Activated naive CD4-positive, alpha-beta T cell treated with anti-CD3 and anti-CD28 coated beads for 36 hours (primary cell): ENCODE measurements at regions of chr9 and their contacts with region 1.

Region 1: GRCh38 chr9:95726756-95727155 is 148.7 kb upstream of the ERCC6L2 start:
- DNase-seq: no peak
- H3K4me3 Mint-ChIP-seq: no peak overlapping the region
- H3K27ac Mint-ChIP-seq: no peak overlapping the region
- H3K4me1 Mint-ChIP-seq: peaks cover 34% of the 10 kb centered on the region
- H3K27me3 Mint-ChIP-seq: peaks cover 3% of the 10 kb centered on the region

Region 2: GRCh38 chr9:95494416-95495371 is 232.1 kb before region 1 on chr9:
- CTCF ChIA-PET with region 1: no interaction called
- intact Hi-C with region 1: loop called (anchors 5 kb)
- DNase-seq: peak; percentile 92
- H3K4me3 Mint-ChIP-seq: peak overlapping the region; percentile 75
- H3K27ac Mint-ChIP-seq: peak overlapping the region; percentile 90
- H3K4me1 Mint-ChIP-seq: peaks cover 49% of the 10 kb centered on the region
- H3K27me3 Mint-ChIP-seq: no peaks in the 10 kb centered on the region

Region 3: DNA sequence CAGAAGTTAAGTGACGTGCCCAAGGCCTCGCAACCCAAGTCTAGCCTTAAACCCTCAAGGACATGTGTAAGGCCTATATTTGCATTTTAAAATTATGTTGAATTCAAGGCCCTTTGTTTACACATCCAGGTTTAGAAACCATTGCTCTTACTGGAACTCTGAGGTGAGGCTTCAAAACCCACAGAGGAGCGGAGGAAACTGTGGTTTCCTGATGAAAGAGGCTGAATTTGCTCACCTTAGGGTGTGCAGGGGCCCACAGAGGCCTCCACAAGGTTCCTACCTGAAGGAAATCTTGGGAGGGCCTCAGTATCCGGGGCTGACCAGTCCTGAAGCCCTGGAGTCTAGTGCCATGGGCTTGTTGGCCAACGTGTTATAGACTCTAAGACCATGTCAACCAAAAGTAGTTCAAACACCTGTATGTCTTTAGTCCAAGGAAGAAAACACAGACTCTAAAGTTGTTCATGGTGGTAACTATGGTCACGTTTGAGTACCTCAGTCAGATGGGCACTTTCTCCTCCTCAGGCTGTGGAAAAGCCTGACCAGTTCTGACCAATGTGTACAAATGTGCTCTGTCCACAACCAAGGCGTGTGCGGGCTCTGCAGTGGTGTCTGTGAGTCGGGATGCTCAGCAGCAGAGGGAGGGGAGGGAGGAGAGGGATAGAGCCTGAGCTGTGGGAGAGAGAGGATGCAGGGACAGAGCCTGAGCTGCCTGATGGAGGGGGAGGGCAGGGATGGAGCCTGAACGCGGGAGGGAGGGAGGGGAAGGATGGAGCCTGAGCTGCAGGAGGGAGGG is 24.2 kb after region 1 on chr9:
- CTCF ChIA-PET with region 1: no interaction called
- intact Hi-C with region 1: loop called (anchors 1 kb)
- DNase-seq: peak; percentile 64
- H3K4me3 Mint-ChIP-seq: no peak overlapping the region
- H3K27ac Mint-ChIP-seq: no peak overlapping the region
- H3K4me1 Mint-ChIP-seq: peaks cover 7% of the 10 kb centered on the region
- H3K27me3 Mint-ChIP-seq: peaks cover 10% of the 10 kb centered on the region

Region 4: DNA sequence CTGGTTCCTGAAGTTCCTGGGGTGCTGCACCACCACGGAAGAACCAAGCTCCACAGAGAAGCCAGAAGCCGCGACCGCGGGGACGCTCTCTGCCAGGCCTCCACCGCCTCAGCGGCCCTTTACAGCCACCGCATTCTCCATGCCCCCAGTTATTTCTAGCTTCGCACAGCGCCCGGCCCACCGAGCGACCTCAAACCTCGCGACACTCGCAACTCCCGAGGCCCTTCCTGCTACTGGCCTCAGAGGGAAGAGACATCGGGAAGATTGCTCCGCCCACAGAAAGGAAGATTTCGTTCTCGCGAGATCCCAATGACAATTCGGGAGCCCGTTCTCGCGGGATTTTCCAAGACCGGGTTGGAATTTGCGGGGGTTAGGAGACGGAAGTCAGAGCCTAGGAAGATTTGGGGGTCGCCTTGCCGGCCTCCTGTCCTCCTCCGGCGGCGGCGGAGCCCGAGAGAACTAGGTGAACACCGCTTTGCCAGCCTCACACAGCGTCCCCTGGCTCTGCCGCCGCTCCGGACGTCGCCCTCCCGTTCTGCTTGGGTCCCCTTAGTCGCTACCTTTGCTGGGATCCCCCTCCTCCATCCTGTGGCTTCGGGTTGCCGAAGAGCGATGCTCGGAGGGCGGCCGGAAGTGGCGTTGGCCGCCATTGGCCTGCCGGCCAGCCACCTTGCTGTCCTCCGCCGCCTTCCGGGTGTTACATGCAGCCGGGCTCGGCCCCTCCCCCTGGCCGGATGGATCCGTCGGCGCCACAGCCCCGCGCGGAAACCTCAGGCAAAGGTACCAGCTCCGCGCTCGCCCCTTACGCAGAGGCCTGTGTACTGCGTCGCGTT is 148.8 kb after region 1 on chr9 and contains the start of gene ERCC6L2:
- CTCF ChIA-PET with region 1: interaction called, 3 read pairs
- intact Hi-C with region 1: loop called (anchors 1 kb)
- DNase-seq: peak; percentile 96
- H3K4me3 Mint-ChIP-seq: no peak within 1 kb of the TSS
- H3K27ac Mint-ChIP-seq: no peak within 1 kb of the TSS
- H3K4me1 Mint-ChIP-seq: peaks cover 24% of the 10 kb centered on the region
- H3K27me3 Mint-ChIP-seq: no peaks in the 10 kb centered on the region
- total RNA-seq, gene ERCC6L2: 20.3 to 20.6 TPM

Region 5: DNA sequence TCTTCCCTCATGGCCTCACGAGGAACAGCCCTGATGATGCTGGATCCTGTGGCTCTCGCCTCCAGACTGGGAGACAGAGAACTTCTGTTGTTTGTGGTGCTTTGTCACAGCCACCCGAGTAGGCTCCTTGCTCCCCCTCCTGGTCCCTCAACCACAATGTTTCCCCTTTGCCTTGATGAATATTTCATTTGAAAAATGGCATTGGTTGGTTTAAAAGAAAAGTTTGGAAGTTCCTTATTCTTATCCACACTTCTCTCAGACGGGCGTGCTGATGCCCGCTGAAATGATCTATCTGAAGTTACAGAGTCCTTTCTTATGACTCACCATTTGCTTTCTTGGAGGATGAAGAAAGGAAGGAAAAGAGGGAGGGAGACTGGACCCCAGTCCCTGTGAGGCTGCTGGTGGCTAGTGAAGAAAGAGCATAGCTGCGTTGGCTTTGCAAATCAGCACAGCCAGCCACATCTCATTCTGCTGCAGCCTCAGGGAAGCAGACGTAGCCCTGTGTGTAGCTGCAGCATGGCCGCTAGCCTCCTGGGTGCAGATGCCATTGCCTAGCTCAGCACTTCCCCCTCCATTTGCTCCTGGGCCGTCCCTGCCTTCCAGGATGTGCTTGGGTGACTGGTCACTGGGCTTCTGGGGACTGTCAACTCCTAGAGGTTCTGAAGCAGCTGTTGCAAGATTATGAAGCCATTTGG is 334.7 kb after region 1 on chr9:
- CTCF ChIA-PET with region 1: no interaction called
- intact Hi-C with region 1: loop called (anchors 1 kb)
- DNase-seq: peak; percentile 72
- H3K4me3 Mint-ChIP-seq: no peak overlapping the region
- H3K27ac Mint-ChIP-seq: no peak overlapping the region
- H3K4me1 Mint-ChIP-seq: peaks cover 8% of the 10 kb centered on the region
- H3K27me3 Mint-ChIP-seq: no peaks in the 10 kb centered on the region

Region 6: GRCh38 chr9:96241391-96241809 is 514.6 kb after region 1 on chr9:
- CTCF ChIA-PET with region 1: no interaction called
- intact Hi-C with region 1: loop called (anchors 1 kb)
- DNase-seq: peak; percentile 83
- H3K4me3 Mint-ChIP-seq: no peak overlapping the region
- H3K27ac Mint-ChIP-seq: no peak overlapping the region
- H3K4me1 Mint-ChIP-seq: peaks cover 13% of the 10 kb centered on the region
- H3K27me3 Mint-ChIP-seq: peaks cover 23% of the 10 kb centered on the region

Region 7: GRCh38 chr9:96654443-96655197 is 927.9 kb after region 1 on chr9:
- CTCF ChIA-PET with region 1: no interaction called
- intact Hi-C with region 1: no loop called
- DNase-seq: peak; percentile 65
- H3K4me3 Mint-ChIP-seq: peak overlapping the region; percentile 73
- H3K27ac Mint-ChIP-seq: peak overlapping the region; percentile 15
- H3K4me1 Mint-ChIP-seq: peaks cover 9% of the 10 kb centered on the region
- H3K27me3 Mint-ChIP-seq: no peaks in the 10 kb centered on the region

Region 8: GRCh38 chr9:96777426-96777864 is 1050.7 kb after region 1 on chr9:
- CTCF ChIA-PET with region 1: no interaction called
- intact Hi-C with region 1: loop called (anchors 10 kb)
- DNase-seq: no peak
- H3K4me3 Mint-ChIP-seq: peak overlapping the region; percentile 100
- H3K27ac Mint-ChIP-seq: peak overlapping the region; percentile 96
- H3K4me1 Mint-ChIP-seq: peaks cover 32% of the 10 kb centered on the region
- H3K27me3 Mint-ChIP-seq: no peaks in the 10 kb centered on the region